ENCODE measurements at regions of chr7 and their contacts with region 1.

Region 1: GRCh38 chr7:47266131-47266706 is 315.7 kb downstream of the TNS3 start:
- DNase-seq: peak; percentile 75
- H3K27ac ChIP-seq: peak overlapping the region; percentile 61
- CTCF ChIP-seq: peak; percentile 97

Region 2: GRCh38 chr7:47227762-47228177 is 38.4 kb before region 1 on chr7:
- CTCF ChIA-PET with region 1: no interaction called
- POLR2A ChIA-PET with region 1: no interaction called
- DNase-seq: no peak
- H3K27ac ChIP-seq: no peak overlapping the region
- CTCF ChIP-seq: no peak

Region 3: GRCh38 chr7:47254081-47255006 is 11.9 kb before region 1 on chr7:
- CTCF ChIA-PET with region 1: interaction called, 19 read pairs
- POLR2A ChIA-PET with region 1: no interaction called
- DNase-seq: peak; percentile 71
- H3K27ac ChIP-seq: peak overlapping the region; percentile 60
- CTCF ChIP-seq: peak; percentile 99

Region 4: DNA sequence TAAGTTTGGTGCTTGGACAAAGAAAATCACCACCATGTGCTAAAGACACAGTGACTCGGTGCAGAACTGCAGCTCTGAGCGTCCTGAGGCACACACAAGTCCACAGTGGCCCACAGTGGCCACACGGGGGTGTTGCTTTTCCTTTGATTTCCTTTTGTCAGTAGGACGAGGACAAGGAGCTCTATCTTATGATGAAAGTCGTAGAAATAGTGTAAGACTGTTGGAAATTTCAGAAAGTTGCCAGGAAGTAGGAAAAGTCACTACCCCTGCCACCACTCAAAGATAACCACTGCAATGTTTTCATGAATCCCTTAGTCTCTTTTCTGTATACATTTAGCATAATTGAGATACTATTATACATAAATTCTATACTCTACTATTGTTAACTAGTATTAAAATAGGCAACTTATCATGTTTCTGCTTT is 169.7 kb after region 1 on chr7:
- CTCF ChIA-PET with region 1: interaction called, 42 read pairs
- POLR2A ChIA-PET with region 1: no interaction called
- DNase-seq: peak; percentile 68
- H3K27ac ChIP-seq: peak overlapping the region; percentile 34
- CTCF ChIP-seq: peak; percentile 67

Region 5: GRCh38 chr7:47818796-47819606 is 552.8 kb after region 1 on chr7:
- CTCF ChIA-PET with region 1: interaction called, 18 read pairs
- POLR2A ChIA-PET with region 1: no interaction called
- DNase-seq: peak; percentile 70
- H3K27ac ChIP-seq: no peak overlapping the region
- CTCF ChIP-seq: peak; percentile 98

Measured in RWPE1 (cell line).